Heart left ventricle (tissue), 16 donors: ENCODE measurements at regions of chr12 and their contacts with region 1.

Region 1: DNA sequence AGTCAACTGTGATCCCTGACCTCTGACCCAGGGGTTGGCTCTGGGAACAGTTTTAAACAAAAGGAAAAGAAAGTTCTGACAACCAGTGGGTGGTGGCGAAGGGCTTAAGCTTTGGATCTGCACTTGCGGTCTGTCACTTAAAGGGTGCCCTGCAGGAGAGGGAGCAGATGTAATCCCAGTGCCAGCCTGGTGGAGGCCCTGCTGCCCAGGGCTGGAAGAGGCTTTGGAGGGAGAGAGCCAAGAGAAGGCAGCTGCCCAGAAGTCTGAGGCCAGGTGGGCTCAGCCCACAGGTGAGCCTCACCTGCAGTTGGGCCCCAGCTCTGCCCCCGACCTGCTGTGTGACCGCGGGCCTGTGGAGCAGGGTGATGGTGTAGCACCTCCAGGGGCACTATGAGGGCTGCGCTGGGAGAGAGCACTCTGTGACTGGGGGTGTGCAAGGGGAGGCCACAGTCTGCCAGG is 19.1 kb downstream of the SH2B3 start:
- DNase-seq: no peak
- ATAC-seq: peak in 3 of 4 donors; percentile 13 to 39 (median 28)
- H3K4me3 ChIP-seq: no peak overlapping the region
- H3K27ac ChIP-seq: peak overlapping the region; percentile 76 to 95 (median 90)
- H3K4me1 ChIP-seq: peaks cover 6 to 98% (median 74%) of the 10 kb centered on the region in 12 donors
- H3K27me3 ChIP-seq: no peaks in the 10 kb centered on the region
- CTCF ChIP-seq: peak in 5 of 12 donors; percentile 8 to 39 (median 28)
- POLR2A ChIP-seq: no peak

Region 2: DNA sequence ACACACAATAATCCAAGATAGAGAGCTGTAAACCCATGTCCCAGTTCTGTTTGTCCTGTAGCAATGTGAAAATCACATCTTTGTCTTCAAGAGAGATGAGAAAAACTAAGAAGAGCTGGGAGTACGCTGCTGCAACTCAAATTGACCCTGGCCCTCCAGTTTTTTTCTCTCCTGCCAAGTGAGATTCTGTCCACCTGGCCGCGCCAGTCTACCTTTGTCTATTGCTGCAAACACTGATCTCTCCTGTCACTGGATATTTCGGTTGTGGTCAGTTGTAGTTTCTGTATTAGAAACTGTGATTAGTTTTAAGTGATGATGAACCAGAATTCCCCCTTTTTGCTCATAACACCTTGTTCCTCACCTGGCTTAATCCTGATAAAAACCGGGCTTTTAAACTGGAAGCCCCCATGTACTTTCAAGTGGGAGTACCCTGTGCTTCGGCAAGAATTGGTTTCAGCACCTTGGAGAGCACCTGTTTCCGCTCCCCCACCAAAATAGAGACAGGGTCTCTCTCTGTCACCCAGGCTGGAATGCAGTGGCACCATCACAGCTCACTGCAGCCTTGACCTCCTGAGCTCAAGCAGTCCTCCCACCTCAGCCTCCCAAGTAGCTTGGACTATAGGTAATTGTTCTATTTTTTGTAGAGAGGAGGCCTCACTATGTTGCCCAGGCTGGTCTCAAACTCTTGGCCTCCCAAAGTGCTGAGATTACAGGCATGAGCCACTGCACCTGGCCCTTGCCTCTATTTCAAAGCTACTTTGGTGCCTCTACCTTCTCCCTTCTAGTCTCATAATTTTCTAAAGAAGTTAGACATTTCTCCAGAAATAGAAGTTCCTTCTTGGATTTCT is 212.7 kb before region 1 on chr12:
- intact Hi-C with region 1: no loop called
- DNase-seq: no peak
- ATAC-seq: no peak
- H3K4me3 ChIP-seq: no peak overlapping the region
- H3K27ac ChIP-seq: no peak overlapping the region
- H3K4me1 ChIP-seq: no peaks in the 10 kb centered on the region
- H3K27me3 ChIP-seq: peaks cover 0 to 30% (median 0%) of the 10 kb centered on the region in 9 donors
- CTCF ChIP-seq: no peak
- POLR2A ChIP-seq: no peak

Region 3: DNA sequence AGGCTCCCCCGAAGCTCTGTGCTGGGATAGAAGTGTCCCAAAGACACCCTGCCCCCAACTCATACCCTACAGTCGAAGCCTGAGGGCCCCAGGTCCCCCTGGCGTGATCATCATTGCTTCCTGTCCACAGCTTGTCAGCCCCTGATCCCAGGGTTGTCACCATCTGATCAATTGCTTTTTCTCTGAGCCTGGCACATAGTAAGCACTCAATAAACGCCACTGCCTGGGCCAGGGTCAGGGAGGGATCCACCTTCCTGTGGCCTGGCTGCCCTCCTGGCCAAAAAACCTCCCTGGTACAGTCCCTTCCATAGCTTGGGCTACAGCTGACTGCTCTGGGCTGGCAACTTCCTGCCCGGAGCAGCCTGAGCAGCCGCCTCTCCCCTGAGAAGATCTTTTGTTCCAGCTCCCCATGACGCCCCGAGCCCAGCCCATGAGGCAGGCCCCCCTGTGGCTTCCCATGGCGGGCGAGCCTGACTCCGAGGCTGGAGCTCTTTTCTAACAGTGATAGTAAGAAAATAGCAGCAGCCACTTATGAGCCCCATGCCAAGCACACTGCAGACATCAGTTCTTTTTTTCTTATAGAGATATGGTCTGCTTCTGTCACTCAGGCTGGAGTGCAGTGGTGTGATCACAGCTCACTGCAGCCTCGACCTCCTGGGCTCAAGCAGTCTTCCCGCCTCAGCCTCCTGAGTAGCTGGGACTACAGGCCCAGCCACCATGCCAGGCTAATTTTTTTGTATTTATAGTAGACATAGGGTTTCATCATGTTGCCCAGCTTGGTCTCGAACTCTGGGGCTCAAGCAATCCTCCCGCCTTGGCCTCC is 12.6 kb before region 1 on chr12:
- intact Hi-C with region 1: loop called in 3 of 10 experiments (anchors 1 to 2 kb)
- DNase-seq: peak in 3 of 5 donors; percentile 61 to 73 (median 73)
- ATAC-seq: peak; percentile 10 to 26 (median 16)
- H3K4me3 ChIP-seq: peak overlapping the region in 2 of 12 donors; percentile 9 to 15
- H3K27ac ChIP-seq: peak overlapping the region; percentile 79 to 99 (median 97)
- H3K4me1 ChIP-seq: peaks cover 46 to 90% (median 82%) of the 10 kb centered on the region in 12 donors
- H3K27me3 ChIP-seq: no peaks in the 10 kb centered on the region
- CTCF ChIP-seq: no peak
- POLR2A ChIP-seq: no peak

Region 4: GRCh38 chr12:111503116-111503515 is 78.3 kb after region 1 on chr12:
- intact Hi-C with region 1: no loop called
- DNase-seq: no peak
- ATAC-seq: no peak
- H3K4me3 ChIP-seq: no peak overlapping the region
- H3K27ac ChIP-seq: no peak overlapping the region
- H3K4me1 ChIP-seq: no peaks in the 10 kb centered on the region
- H3K27me3 ChIP-seq: no peaks in the 10 kb centered on the region
- CTCF ChIP-seq: no peak
- POLR2A ChIP-seq: no peak